HCT116 (cell line): ENCODE measurements at regions of chr17 and their contacts with region 1.

Region 1: DNA sequence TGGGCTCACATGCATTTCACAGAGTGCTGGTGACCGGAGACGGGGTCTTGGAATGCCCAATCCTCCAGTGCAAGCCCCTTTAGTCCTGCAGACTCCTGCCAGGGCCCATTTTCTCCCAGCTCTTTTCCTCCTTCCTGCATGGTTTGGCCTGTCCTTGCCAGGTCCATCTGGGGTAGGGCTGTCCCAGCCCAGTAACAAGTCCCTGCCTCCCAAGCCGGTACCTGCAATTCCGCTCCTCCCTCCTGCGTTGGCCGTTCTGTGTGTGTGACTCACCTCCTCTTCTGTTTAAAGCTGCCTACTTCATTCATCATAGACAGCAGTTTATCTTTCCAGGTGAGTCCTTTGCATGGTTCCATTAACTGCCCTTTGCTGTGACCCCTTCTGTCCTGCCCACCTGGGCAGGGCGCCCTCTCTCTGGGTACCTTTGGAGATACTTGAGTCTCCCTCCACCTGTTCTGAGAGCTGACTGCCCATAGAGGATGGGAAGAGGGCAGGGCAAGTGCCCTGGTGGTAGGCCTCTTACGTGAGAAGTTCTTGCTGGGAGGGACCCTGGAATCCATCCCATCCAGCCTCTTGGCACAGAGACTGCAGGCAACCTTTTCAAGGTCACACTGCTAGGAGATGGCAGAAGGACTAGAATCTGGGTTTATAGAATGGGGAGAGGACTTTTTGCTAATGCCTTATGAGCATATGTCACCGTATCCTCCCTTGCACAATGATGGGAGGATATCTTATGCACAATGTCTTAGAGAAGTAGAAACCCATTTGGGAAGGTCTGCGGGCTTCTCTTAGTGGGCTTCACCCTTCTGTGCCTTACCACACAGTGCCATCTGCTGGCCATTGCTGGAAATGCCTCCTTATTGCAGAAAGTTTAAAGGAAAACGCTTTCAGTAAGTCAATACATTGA is 29.7 kb upstream of the LGALS9 start:
- DNase-seq: peak; percentile 50
- ATAC-seq: peak; percentile 57
- H3K4me3 ChIP-seq: no peak overlapping the region
- H3K27ac ChIP-seq: 0 out of 2 replicates have a peak overlapping the region, but pooled peaks have one; percentile 14
- H3K4me1 ChIP-seq: peaks cover 12 to 16% of the 10 kb centered on the region in 2 experiments
- H3K27me3 ChIP-seq: no peaks in the 10 kb centered on the region
- CTCF ChIP-seq: peak; percentile 77 to 97 (median 87); a peak in 5 of 6 replicates
- POLR2A ChIP-seq: no peak
- RAD21 ChIP-seq: peak; percentile 83

Region 2: DNA sequence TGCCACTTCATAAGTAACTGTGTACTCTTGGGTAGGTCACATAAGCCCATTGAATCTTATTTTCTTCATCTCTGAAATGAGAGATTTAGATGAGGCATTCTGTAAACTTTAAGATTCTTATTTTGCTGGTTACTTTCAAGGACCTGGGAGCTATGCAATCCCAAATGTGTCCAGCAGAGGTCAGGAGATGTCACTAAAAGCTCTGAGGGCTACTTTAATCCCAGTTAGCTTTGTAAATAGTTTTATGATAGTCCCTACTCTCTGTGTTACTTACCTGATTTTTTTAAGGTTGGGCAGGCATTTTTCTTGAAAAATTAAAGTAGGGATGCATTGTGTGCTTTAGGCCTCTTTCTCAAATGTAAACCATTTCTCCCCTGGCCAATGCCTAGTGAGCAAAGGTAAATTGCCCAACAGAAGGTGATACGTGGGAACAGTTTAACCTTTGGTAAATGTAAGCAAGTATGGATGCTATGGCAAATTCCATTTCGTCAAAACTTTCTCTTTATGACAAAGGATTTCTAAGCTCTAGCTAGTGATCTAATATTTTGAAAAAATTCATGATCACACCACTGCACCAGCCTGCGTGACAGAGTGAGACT is 364.5 kb before region 1 on chr17:
- CTCF ChIA-PET with region 1: interaction called, 58 read pairs
- POLR2A ChIA-PET with region 1: no interaction called
- RAD21 ChIA-PET with region 1: interaction called, 6 to 9 read pairs
- intact Hi-C with region 1: loop called (anchors 2 kb)
- DNase-seq: peak; percentile 61
- ATAC-seq: peak; percentile 73
- H3K4me3 ChIP-seq: no peak overlapping the region
- H3K27ac ChIP-seq: no peak overlapping the region
- H3K4me1 ChIP-seq: peaks cover 9 to 11% of the 10 kb centered on the region in 2 experiments
- H3K27me3 ChIP-seq: no peaks in the 10 kb centered on the region
- CTCF ChIP-seq: peak; percentile 79 to 94 (median 84)
- POLR2A ChIP-seq: no peak
- RAD21 ChIP-seq: peak; percentile 83

Region 3: DNA sequence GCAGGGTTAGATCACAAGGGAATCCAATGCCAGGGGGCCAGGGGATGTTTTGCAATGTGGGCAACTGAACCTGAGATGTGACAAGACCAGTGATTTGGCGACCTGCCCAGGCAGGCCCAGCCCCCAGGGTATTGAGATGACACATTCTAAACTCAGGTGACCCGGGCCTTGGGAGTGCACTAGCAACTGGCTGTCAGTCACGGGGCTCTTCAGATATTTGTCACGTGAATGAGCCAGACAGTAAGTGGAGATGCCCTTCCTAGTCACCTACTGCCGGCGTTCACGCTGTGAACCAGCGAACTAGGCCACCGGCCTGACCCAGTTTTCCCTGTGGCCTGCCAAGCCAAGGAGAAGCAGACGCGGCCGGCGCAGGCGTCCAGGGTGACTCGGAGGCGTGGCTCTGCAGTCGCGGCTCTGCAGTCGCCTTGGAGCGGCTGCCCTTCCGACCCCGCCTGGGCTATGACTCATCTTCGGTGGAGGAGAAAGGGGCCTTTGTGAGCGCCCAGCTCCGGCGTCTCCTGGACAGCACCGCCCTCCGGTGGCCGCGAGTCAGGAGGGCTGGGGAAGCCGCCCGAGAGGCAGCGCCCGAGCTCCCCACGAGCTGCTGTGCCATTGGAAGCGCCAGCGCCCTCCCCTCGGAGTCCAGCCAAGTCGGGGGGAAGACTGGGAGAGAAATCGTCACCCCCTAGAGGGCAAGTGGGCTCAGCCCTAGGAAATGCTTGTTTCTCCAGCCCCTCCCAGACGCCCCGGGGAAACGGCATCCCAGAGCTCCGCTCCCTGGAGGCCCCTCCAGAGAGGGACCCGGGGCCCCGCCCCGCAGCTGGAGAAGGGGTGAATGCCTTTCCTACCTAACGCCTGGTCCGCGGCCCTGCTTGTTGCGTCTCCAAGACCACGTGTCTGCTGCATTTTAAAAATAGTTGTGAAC is 268.6 kb before region 1 on chr17:
- CTCF ChIA-PET with region 1: interaction called, 15 read pairs
- POLR2A ChIA-PET with region 1: no interaction called
- RAD21 ChIA-PET with region 1: interaction called, 3 to 5 read pairs
- intact Hi-C with region 1: no loop called
- DNase-seq: peak; percentile 97
- ATAC-seq: peak; percentile 90
- H3K4me3 ChIP-seq: peak overlapping the region; percentile 43 to 57
- H3K27ac ChIP-seq: peak overlapping the region; percentile 92
- H3K4me1 ChIP-seq: peaks cover 31 to 35% of the 10 kb centered on the region in 2 experiments
- H3K27me3 ChIP-seq: no peaks in the 10 kb centered on the region
- CTCF ChIP-seq: peak; percentile 70 to 85 (median 73)
- POLR2A ChIP-seq: peak; percentile 2
- RAD21 ChIP-seq: peak; percentile 95

Region 4: DNA sequence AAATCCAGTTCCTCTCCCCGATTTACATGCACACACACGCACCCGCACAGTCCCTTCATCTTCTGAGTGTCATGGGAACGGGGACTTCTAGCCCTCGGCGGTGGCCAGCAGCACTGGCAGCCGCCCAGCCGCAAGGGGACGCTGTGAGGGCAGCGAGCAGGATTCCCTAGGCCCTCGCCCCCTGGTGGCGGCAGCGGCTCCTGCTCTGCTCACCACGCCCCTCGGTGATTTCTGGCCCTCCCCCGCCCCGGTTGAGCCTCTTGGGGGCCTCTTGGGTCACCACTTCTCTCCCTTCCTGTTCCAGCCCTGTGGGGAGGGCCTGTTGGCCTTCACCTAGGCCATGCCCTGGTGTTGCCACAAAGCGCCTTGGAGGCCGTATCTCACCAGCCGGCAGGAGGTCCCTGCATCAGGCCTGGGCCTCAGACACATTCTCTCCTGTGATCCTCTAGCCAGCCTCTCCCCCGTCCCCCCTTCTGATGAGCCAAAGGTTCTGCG is 220.3 kb before region 1 on chr17:
- CTCF ChIA-PET with region 1: interaction called, 27 read pairs
- POLR2A ChIA-PET with region 1: no interaction called
- RAD21 ChIA-PET with region 1: no interaction called
- intact Hi-C with region 1: no loop called
- DNase-seq: peak; percentile 74
- ATAC-seq: peak; percentile 92
- H3K4me3 ChIP-seq: peak overlapping the region; percentile 13 to 35; a peak in 3 of 4 replicates
- H3K27ac ChIP-seq: no peak overlapping the region; the same call in 1 of the 2 replicates
- H3K4me1 ChIP-seq: peaks cover 11 to 38% of the 10 kb centered on the region in 2 experiments; a peak in 3 of 4 replicates
- H3K27me3 ChIP-seq: no peaks in the 10 kb centered on the region
- CTCF ChIP-seq: peak; percentile 100
- POLR2A ChIP-seq: no peak
- RAD21 ChIP-seq: peak; percentile 68

Region 5: DNA sequence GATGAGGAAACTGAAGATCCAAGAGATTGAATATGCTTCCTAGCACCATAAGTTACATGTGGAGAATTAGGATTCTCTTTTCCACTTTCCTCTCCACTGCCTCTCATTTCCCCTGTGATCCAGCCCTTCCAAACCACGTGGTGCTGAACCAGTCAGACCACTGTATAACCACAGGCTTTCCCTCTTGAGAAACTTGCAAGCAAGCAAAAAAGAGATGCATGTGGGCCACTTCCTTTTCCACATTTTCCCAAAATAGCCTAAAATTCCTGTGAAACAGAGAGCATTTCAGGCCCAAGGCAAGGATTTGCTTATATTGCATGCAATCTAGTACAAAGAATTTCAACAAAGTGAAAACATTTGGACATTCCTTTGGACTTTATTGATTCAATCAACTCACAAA is 204.4 kb before region 1 on chr17:
- CTCF ChIA-PET with region 1: no interaction called
- POLR2A ChIA-PET with region 1: no interaction called
- RAD21 ChIA-PET with region 1: no interaction called
- intact Hi-C with region 1: no loop called
- DNase-seq: no peak
- ATAC-seq: no peak
- H3K4me3 ChIP-seq: no peak overlapping the region
- H3K27ac ChIP-seq: no peak overlapping the region
- H3K4me1 ChIP-seq: no peaks in the 10 kb centered on the region
- H3K27me3 ChIP-seq: no peaks in the 10 kb centered on the region
- CTCF ChIP-seq: no peak
- POLR2A ChIP-seq: no peak
- RAD21 ChIP-seq: no peak

Region 6: GRCh38 chr17:27455914-27456680 is 145.2 kb before region 1 on chr17 and contains the start of gene KSR1:
- CTCF ChIA-PET with region 1: interaction called, 10 read pairs
- POLR2A ChIA-PET with region 1: interaction called, 4 read pairs
- RAD21 ChIA-PET with region 1: no interaction called
- intact Hi-C with region 1: no loop called
- DNase-seq: peak; percentile 22
- ATAC-seq: peak; percentile 97
- H3K4me3 ChIP-seq: peak within 1 kb of the TSS; percentile 63 to 71
- H3K27ac ChIP-seq: peak within 1 kb of the TSS; percentile 36; the same call in 1 of the 2 replicates
- H3K4me1 ChIP-seq: peaks cover 17 to 26% of the 10 kb centered on the region in 2 experiments
- H3K27me3 ChIP-seq: no peaks in the 10 kb centered on the region
- CTCF ChIP-seq: peak; percentile 3 to 27 (median 9); a peak in 1 of 6 replicates
- POLR2A ChIP-seq: peak; percentile 58
- RAD21 ChIP-seq: peak; percentile 24; the same call in 1 of the 2 replicates
- total RNA-seq, gene KSR1: 16.5 TPM

Region 7: GRCh38 chr17:27569257-27569722 is 32.0 kb before region 1 on chr17:
- CTCF ChIA-PET with region 1: interaction called, 7 read pairs
- POLR2A ChIA-PET with region 1: no interaction called
- RAD21 ChIA-PET with region 1: no interaction called
- intact Hi-C with region 1: loop called (anchors 2 kb)
- DNase-seq: no peak
- ATAC-seq: peak; percentile 97
- H3K4me3 ChIP-seq: no peak overlapping the region
- H3K27ac ChIP-seq: no peak overlapping the region
- H3K4me1 ChIP-seq: peaks cover 16 to 38% of the 10 kb centered on the region in 2 experiments
- H3K27me3 ChIP-seq: no peaks in the 10 kb centered on the region
- CTCF ChIP-seq: peak; percentile 49 to 92 (median 90); a peak in 5 of 6 replicates
- POLR2A ChIP-seq: no peak
- RAD21 ChIP-seq: peak; percentile 60

Region 8: DNA sequence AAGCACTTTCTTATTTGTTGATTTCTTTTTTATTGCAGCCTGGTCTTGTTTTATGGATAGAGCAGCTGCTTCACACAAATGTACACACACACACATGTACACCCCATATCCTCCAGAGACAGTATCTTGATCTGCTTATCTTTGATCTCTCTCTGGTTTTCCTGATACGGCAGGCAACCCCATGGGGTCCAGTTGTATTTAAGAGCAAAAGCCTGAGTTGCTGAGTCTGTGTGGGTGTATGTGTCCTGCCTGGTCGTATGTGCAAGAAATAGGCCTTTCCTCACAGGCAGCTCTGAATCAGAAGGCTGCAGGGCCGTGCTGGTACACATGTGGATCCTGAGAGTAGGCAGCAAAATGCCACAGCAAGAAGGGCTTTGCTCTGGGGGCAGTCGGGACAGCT is 15.1 kb after region 1 on chr17:
- CTCF ChIA-PET with region 1: no interaction called
- POLR2A ChIA-PET with region 1: no interaction called
- RAD21 ChIA-PET with region 1: no interaction called
- intact Hi-C with region 1: no loop called
- DNase-seq: no peak
- ATAC-seq: no peak
- H3K4me3 ChIP-seq: no peak overlapping the region
- H3K27ac ChIP-seq: no peak overlapping the region
- H3K4me1 ChIP-seq: no peaks in the 10 kb centered on the region
- H3K27me3 ChIP-seq: no peaks in the 10 kb centered on the region
- CTCF ChIP-seq: no peak
- POLR2A ChIP-seq: no peak
- RAD21 ChIP-seq: no peak

Region 9: GRCh38 chr17:27654654-27655524 is 53.6 kb after region 1 on chr17:
- CTCF ChIA-PET with region 1: interaction called, 6 read pairs
- POLR2A ChIA-PET with region 1: no interaction called
- RAD21 ChIA-PET with region 1: no interaction called
- intact Hi-C with region 1: loop called (anchors 1 kb)
- DNase-seq: peak; percentile 76
- ATAC-seq: peak; percentile 97
- H3K4me3 ChIP-seq: no peak overlapping the region
- H3K27ac ChIP-seq: peak overlapping the region; percentile 13; the same call in 1 of the 2 replicates
- H3K4me1 ChIP-seq: peaks cover 3 to 6% of the 10 kb centered on the region in 2 experiments; a peak in 2 of 4 replicates
- H3K27me3 ChIP-seq: no peaks in the 10 kb centered on the region
- CTCF ChIP-seq: peak; percentile 88 to 99 (median 99)
- POLR2A ChIP-seq: no peak
- RAD21 ChIP-seq: peak; percentile 78

Region 10: GRCh38 chr17:27747462-27748359 is 146.4 kb after region 1 on chr17:
- CTCF ChIA-PET with region 1: no interaction called
- POLR2A ChIA-PET with region 1: no interaction called
- RAD21 ChIA-PET with region 1: no interaction called
- intact Hi-C with region 1: no loop called
- DNase-seq: peak; percentile 23
- ATAC-seq: peak; percentile 76
- H3K4me3 ChIP-seq: no peak overlapping the region
- H3K27ac ChIP-seq: no peak overlapping the region
- H3K4me1 ChIP-seq: peaks cover 0 to 4% of the 10 kb centered on the region in 2 experiments; a peak in 1 of 4 replicates
- H3K27me3 ChIP-seq: no peaks in the 10 kb centered on the region
- CTCF ChIP-seq: peak in 2 of 3 experiments; percentile 65 to 71; a peak in 4 of 6 replicates
- POLR2A ChIP-seq: no peak
- RAD21 ChIP-seq: no peak